ENCODE measurements at regions of chr13 and their contacts with region 1.

Region 1: GRCh38 chr13:114110091-114110829 is 22.2 kb downstream of the RASA3 start:
- DNase-seq: peak; percentile 87
- H3K4me3 Mint-ChIP-seq: peak overlapping the region; percentile 77
- H3K27ac Mint-ChIP-seq: peak overlapping the region; percentile 88
- H3K4me1 Mint-ChIP-seq: peaks cover 78% of the 10 kb centered on the region
- H3K27me3 Mint-ChIP-seq: no peaks in the 10 kb centered on the region

Region 2: GRCh38 chr13:113951246-113951999 is 158.8 kb before region 1 on chr13:
- CTCF ChIA-PET with region 1: no interaction called
- POLR2A ChIA-PET with region 1: no interaction called
- intact Hi-C with region 1: loop called (anchors 5 kb)
- DNase-seq: peak; percentile 79
- H3K4me3 Mint-ChIP-seq: no peak overlapping the region
- H3K27ac Mint-ChIP-seq: no peak overlapping the region
- H3K4me1 Mint-ChIP-seq: no peaks in the 10 kb centered on the region
- H3K27me3 Mint-ChIP-seq: no peaks in the 10 kb centered on the region

Region 3: DNA sequence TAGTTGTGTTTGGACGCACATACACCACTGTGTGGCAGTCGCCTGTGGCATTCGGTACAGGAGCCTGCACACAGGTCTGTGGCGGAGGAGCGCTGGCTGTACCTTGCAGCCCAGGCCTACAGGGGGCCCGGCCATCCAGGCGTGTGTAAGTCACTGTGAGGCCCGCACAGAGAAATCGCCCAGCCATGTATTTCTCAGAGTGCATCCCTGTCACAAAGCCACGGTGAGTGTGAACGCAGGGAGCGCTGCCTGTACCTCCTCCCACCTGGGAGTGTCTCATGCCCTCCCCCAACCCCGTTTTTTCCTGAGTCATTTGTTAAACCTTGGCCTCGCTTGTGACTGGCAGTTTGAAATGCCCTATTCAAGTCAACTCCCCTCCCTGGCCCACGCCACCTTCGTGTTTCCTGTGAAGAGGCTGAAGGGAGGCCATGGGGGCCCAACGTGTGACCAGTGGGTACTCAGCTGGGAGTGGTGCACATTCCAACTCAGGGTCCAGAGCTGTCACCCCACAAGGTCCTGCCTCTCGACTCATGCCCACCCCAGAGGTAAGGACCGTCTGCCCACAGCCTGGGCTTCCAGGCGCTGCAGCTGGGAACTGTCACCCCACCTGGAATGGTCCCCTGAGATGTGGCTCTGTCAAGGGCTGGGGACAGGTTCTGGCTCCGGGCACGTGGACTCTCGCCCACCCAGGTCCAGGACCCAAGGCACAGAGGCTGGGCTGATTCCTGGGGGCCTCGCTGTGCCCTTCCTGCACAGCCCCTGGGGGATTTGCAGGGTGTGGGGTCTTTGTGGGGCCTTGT is 33.7 kb after region 1 on chr13:
- CTCF ChIA-PET with region 1: interaction called, 6 read pairs
- POLR2A ChIA-PET with region 1: interaction called, 5 read pairs
- intact Hi-C with region 1: loop called (anchors 5 kb)
- DNase-seq: peak; percentile 66
- H3K4me3 Mint-ChIP-seq: no peak overlapping the region
- H3K27ac Mint-ChIP-seq: no peak overlapping the region
- H3K4me1 Mint-ChIP-seq: peaks cover 13% of the 10 kb centered on the region
- H3K27me3 Mint-ChIP-seq: no peaks in the 10 kb centered on the region

Region 4: GRCh38 chr13:114194853-114195252 is 84.6 kb after region 1 on chr13:
- CTCF ChIA-PET with region 1: no interaction called
- POLR2A ChIA-PET with region 1: no interaction called
- intact Hi-C with region 1: no loop called
- DNase-seq: peak; percentile 52
- H3K4me3 Mint-ChIP-seq: no peak overlapping the region
- H3K27ac Mint-ChIP-seq: no peak overlapping the region
- H3K4me1 Mint-ChIP-seq: peaks cover 14% of the 10 kb centered on the region
- H3K27me3 Mint-ChIP-seq: no peaks in the 10 kb centered on the region